Mucosa of descending colon (tissue), 3 donors: ENCODE measurements at regions of chr11 and their contacts with region 1.

Region 1: GRCh38 chr11:3849297-3849874 is 6.1 kb upstream of the STIM1 start:
- DNase-seq: peak in 1 of 3 donors; percentile 76
- ATAC-seq: peak; percentile 68
- H3K4me3 ChIP-seq: no peak overlapping the region
- H3K4me1 ChIP-seq: peaks cover 2% of the 10 kb centered on the region
- CTCF ChIP-seq: peak; percentile 49

Region 2: DNA sequence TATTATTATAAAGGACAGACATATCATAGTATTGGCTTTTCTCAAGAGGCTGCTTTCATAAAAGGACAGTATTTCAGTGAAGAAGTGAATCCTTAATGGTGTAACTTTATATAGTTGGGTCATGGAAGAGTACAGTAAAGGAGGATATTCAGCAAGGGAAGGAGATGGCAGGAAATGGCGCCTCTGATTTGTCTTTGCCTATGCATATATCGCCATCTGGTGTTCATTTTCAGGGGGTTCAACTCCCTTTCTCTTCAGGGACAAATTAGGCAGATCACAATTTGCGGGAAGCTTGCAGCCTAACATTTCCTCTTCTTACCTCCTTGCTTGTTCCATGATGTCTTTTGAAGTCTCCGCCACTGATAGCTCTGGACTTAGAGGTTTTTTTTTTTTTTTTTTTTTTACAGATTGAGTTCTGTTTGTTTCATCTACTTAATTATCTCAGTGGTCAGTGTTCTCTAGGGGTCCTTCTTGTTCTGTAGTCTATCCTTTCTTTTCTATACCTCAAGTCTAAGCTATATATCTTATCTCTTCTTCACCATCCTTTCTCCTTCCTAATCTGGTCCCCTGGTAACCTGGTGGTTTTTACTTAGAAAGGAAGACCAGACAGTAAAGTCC is 223.4 kb after region 1 on chr11:
- intact Hi-C with region 1: loop called (anchors 2 to 5 kb)
- DNase-seq: peak in 1 of 3 donors; percentile 82
- ATAC-seq: peak; percentile 95
- H3K4me3 ChIP-seq: no peak overlapping the region
- H3K4me1 ChIP-seq: peaks cover 6% of the 10 kb centered on the region
- CTCF ChIP-seq: peak; percentile 51